Gastrocnemius medialis (tissue), 4 donors: ENCODE measurements at regions of chr17 and their contacts with region 1.

Region 1: DNA sequence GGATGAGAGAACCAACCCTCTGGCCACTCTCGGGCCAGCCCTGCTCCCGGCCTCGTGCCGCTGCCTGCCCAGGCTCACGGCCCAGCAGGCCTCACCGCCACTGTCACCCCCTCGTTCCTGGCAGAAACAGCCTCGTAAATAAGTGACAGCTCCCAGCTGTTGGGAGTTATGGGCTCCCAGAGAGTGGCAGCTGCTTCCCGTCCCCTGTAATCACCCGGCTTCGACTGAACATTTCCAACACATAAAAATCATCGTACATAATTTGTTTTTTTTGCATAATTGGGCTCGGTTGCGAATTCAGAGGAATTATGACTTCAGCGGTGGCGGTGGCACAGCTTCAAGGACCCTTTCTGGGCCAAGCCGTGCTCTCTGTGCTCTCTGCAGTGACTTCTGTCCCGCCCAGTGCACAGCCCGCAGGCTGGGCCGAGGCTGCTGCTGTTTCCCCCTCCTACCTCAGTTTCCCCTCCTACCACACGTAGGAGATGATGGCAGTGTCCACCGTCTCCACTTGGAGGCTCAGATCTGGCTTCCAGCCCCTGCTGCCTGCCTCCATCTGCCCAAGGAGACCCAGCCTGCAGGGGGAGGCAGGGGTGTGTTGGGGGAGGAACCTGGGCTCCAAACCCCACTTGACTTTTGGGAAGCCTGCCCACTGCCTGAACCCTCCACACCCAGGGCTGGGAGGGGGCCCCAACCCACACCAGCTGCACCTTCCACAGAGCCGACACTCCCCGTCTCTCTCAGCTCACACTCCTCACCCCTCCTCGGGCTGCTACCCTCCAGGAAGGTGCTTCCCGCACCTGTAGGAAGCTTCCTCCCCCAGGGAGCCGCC is 84.9 kb downstream of the RTN4RL1 start:
- DNase-seq: peak; percentile 85 to 87
- ATAC-seq: peak; percentile 95 to 98
- H3K4me3 ChIP-seq: no peak overlapping the region
- H3K27ac ChIP-seq: peak overlapping the region; percentile 86 to 94 (median 88)
- H3K4me1 ChIP-seq: peaks cover 22 to 23% of the 10 kb centered on the region in 2 donors
- H3K27me3 ChIP-seq: no peaks in the 10 kb centered on the region
- CTCF ChIP-seq: no peak
- POLR2A ChIP-seq: no peak

Region 2: DNA sequence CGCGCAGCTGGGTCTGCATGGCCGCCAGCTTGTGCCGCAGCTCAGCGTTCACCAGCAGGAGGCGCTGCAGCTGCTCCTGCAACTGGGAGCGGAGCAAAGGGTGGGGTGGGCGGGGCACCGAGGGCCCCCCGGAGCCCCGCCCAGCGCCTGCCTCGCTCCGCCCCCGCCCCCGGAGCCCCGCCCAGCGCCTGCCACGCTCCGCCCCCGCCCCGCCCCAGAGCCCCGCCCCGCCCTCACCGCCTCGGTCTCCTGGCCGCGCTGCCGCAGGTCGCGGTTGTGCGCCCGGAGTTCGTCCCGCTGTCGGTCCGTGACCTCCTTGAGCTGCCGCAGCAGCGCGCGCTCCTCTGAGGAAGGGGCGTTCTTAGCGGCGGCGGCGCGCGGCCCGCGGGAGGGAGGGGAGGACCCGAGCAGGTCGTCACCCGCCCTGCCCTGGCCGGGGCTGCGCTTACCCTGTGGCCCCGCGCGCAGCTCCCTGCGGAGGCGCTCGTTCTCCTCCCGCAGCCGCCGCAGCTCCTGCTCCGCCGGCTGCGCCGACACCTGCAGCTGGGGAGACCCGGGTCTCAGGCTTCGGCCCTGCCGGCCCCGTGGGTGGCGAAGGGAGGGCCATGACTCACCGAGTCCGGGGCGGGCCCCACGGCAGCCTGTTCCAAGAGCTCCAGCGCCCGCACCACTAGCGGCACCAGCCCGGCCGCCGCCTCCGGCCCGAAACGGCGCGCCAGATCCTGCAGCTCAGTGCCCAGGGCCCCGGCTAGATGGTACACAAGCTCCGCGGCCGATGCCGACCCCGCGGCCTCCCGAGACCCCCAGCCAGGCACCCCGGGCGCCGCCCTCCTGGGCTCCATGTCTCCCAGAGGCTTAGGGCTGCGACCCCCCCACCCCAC is 291.0 kb before region 1 on chr17:
- in situ Hi-C with region 1: no loop called
- intact Hi-C with region 1: no loop called
- DNase-seq: peak; percentile 86 to 94
- ATAC-seq: peak; percentile 55 to 66
- H3K4me3 ChIP-seq: peak overlapping the region; percentile 64 to 96 (median 80)
- H3K27ac ChIP-seq: peak overlapping the region; percentile 95 to 100 (median 99)
- H3K4me1 ChIP-seq: peaks cover 33 to 36% of the 10 kb centered on the region in 2 donors
- H3K27me3 ChIP-seq: no peaks in the 10 kb centered on the region
- CTCF ChIP-seq: peak in 2 of 5 experiments; percentile 88 to 98
- POLR2A ChIP-seq: peak; percentile 84 to 86

Region 3: GRCh38 chr17:1969712-1970111 is 29.5 kb after region 1 on chr17:
- in situ Hi-C with region 1: no loop called
- intact Hi-C with region 1: loop called (anchors 2 kb)
- DNase-seq: no peak
- ATAC-seq: no peak
- H3K4me3 ChIP-seq: no peak overlapping the region
- H3K27ac ChIP-seq: peak overlapping the region in 3 of 4 donors; percentile 69 to 76 (median 72)
- H3K4me1 ChIP-seq: peaks cover 15% of the 10 kb centered on the region in 2 donors
- H3K27me3 ChIP-seq: no peaks in the 10 kb centered on the region
- CTCF ChIP-seq: no peak
- POLR2A ChIP-seq: no peak

Region 4: DNA sequence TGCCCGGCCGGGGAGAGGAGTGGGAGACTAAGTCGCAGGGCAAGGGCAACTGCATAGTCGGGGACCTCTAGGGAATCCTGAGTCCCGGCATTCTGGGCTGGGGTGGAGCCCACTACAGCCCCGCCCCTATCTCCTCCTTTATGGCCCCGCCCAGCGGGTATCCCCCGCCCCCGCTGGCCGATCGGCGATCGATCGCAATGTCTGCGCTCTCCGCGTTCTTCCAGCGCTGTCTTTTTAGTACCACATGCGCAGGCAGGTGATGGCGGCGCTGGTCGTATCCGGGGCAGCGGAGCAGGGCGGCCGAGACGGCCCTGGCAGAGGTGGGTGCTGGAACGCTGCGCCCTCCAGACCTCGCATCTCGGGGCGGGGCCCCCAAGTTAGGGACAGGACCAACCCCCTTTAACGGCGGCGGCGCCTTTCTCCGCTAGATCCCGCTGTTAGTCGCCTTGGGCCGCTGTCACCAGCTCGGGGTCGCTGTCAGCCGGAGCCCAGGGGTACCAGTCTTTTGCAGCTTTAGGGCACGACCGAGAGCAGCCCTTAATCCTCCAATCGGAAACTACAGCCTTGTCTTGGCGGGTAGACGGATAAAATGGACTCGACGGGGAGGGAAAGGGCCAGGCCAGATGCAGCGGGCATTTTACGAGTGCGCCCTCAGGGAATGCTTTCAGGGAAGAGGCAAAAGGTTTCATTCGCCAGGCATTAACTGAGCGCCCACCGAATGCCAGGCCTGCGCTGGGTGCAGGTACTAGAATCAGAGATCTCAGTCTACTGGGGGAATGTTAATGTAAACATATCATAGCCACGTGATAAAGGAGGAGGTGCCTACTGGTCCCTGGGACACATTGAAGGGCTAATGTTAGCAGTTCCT is 90.0 kb after region 1 on chr17 and contains the start of gene DPH1:
- in situ Hi-C with region 1: no loop called
- intact Hi-C with region 1: no loop called
- DNase-seq: peak; percentile 85 to 90
- ATAC-seq: peak; percentile 81 to 83
- H3K4me3 ChIP-seq: peak within 1 kb of the TSS; percentile 75 to 100 (median 91)
- H3K27ac ChIP-seq: peak within 1 kb of the TSS; percentile 87 to 98 (median 96)
- H3K4me1 ChIP-seq: peaks cover 25 to 29% of the 10 kb centered on the region in 2 donors
- H3K27me3 ChIP-seq: no peaks in the 10 kb centered on the region
- CTCF ChIP-seq: peak in 2 of 5 experiments; percentile 10 to 41
- POLR2A ChIP-seq: peak; percentile 78 to 88
- total RNA-seq, gene DPH1: 47.2 to 59.9 (median 57.7) TPM